Natural killer cell (primary cell): ENCODE measurements at regions of chr17 and their contacts with region 1.

Region 1: GRCh38 chr17:9924735-9925191 is 19.7 kb upstream of the RCVRN start:
- DNase-seq: peak in 1 of 2 donors; percentile 71
- ATAC-seq: peak; percentile 66 to 78 (median 76)
- H3K4me3 ChIP-seq: no peak overlapping the region
- H3K4me3 Mint-ChIP-seq: no peak overlapping the region
- H3K27ac ChIP-seq: no peak overlapping the region
- H3K27ac Mint-ChIP-seq: peak overlapping the region; percentile 50 to 74
- H3K4me1 ChIP-seq: peaks cover 3% of the 10 kb centered on the region
- H3K4me1 Mint-ChIP-seq: peaks cover 6 to 12% of the 10 kb centered on the region in 2 donors
- H3K27me3 ChIP-seq: no peaks in the 10 kb centered on the region
- H3K27me3 Mint-ChIP-seq: no peaks in the 10 kb centered on the region
- CTCF ChIP-seq: peak; percentile 87

Region 2: DNA sequence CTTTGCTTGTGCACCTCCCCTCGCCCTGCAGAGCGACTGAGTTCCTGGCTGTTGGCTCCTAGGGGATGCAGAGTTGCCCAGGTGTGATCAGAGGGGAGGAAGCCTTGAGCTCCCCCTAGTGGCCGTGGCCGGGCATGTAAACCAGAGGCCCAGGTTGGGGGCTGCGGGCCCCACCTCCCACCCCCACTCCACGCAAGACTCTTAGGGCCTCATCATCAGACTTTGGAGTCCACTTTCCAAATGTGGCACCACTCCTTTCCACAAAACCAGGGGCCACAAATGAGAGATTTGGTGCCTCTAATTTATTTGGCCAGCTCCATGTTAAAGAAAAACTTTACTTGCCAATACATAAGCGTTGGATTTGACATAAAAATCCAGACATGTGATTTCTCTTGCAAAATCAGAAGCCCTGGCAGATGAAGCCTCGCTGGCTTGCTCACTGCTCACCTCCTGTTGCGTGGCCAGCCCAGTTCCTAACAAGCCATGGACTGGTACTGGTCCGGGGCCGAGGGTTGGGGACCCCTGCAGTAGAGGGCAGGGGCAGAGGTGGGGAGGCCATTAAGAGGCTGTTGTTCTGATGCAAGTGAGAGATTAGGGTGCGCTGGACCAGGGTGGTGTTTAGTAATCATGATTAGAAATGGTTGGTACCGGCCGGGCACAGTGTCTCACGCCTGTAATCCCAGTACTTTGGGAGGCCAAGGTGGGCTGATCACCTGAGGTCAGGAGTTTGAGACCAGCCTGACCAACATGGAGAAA is 302.3 kb after region 1 on chr17:
- intact Hi-C with region 1: loop called (anchors 1 kb)
- DNase-seq: peak; percentile 62 to 72
- ATAC-seq: peak; percentile 73 to 88 (median 81)
- H3K4me3 ChIP-seq: no peak overlapping the region
- H3K4me3 Mint-ChIP-seq: no peak overlapping the region
- H3K27ac ChIP-seq: no peak overlapping the region
- H3K27ac Mint-ChIP-seq: no peak overlapping the region
- H3K4me1 ChIP-seq: peaks cover 12% of the 10 kb centered on the region
- H3K4me1 Mint-ChIP-seq: peaks cover 5 to 17% of the 10 kb centered on the region in 2 donors
- H3K27me3 ChIP-seq: no peaks in the 10 kb centered on the region
- H3K27me3 Mint-ChIP-seq: peaks cover 0 to 2% of the 10 kb centered on the region in 2 donors
- CTCF ChIP-seq: peak; percentile 99

Region 3: DNA sequence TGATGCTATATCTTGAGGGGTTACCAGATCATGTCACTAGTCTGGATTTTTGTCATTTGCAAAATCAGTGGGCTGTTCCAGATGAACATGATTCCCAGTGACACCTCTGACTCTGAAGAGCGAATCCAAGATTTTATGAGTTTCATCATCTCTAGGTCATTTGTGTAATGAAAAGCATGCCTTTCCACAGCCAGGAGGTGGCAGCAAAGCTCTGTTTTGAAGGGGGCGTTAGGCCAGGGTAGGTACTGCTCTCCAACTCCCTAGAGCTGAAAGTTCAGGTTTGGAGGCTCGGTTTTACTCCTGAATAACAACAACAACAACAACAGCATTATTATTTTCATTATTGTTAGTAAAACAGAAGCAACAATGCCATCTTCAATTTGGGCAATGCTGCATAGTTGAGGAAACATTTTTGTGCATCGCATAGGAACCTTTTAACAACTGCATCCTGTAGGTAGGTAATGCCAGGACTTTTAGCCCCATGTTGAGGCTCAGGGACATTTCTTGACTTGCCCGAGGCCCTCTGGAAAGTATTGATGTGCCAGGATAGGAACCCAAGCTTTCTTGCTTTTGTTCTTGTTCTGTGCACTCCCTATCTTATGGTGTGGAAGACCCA is 371.1 kb after region 1 on chr17:
- intact Hi-C with region 1: loop called (anchors 10 kb)
- DNase-seq: peak; percentile 30 to 41
- ATAC-seq: peak; percentile 59 to 75 (median 68)
- H3K4me3 ChIP-seq: no peak overlapping the region
- H3K4me3 Mint-ChIP-seq: no peak overlapping the region
- H3K27ac ChIP-seq: no peak overlapping the region
- H3K27ac Mint-ChIP-seq: no peak overlapping the region
- H3K4me1 ChIP-seq: no peaks in the 10 kb centered on the region
- H3K4me1 Mint-ChIP-seq: peaks cover 0 to 7% of the 10 kb centered on the region in 2 donors
- H3K27me3 ChIP-seq: no peaks in the 10 kb centered on the region
- H3K27me3 Mint-ChIP-seq: peaks cover 2 to 6% of the 10 kb centered on the region in 2 donors
- CTCF ChIP-seq: peak; percentile 63

Region 4: GRCh38 chr17:10349403-10349802 is 424.6 kb after region 1 on chr17:
- intact Hi-C with region 1: loop called (anchors 2 kb)
- DNase-seq: peak in 1 of 2 donors; percentile 12
- ATAC-seq: peak in 1 of 3 donors; percentile 42
- H3K4me3 ChIP-seq: no peak overlapping the region
- H3K4me3 Mint-ChIP-seq: no peak overlapping the region
- H3K27ac ChIP-seq: no peak overlapping the region
- H3K27ac Mint-ChIP-seq: no peak overlapping the region
- H3K4me1 ChIP-seq: no peaks in the 10 kb centered on the region
- H3K4me1 Mint-ChIP-seq: peaks cover 0 to 6% of the 10 kb centered on the region in 2 donors
- H3K27me3 ChIP-seq: no peaks in the 10 kb centered on the region
- H3K27me3 Mint-ChIP-seq: peaks cover 0 to 2% of the 10 kb centered on the region in 2 donors
- CTCF ChIP-seq: no peak

Region 5: DNA sequence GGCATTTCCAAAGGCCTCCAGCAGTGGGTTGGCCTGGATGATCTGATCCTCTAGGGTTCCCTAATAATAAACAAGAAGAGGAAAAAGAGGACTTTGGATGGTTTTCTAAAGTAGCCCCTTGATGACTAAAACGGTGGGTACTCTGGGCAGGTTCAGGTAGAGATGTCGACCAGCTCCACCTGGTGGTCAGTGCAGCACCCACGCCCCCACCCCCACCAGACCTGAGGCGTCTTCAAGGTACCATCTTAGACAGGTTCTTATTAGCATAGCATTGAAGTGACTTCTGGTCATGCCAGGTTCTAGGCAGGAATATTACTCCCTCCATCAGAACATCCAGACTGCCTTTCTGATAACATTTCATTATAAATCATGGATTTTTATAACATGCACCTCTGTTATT is 433.0 kb after region 1 on chr17:
- intact Hi-C with region 1: loop called (anchors 2 kb)
- DNase-seq: peak in 1 of 2 donors; percentile 44
- ATAC-seq: peak in 2 of 3 donors; percentile 47 to 57
- H3K4me3 ChIP-seq: no peak overlapping the region
- H3K4me3 Mint-ChIP-seq: no peak overlapping the region
- H3K27ac ChIP-seq: no peak overlapping the region
- H3K27ac Mint-ChIP-seq: no peak overlapping the region
- H3K4me1 ChIP-seq: no peaks in the 10 kb centered on the region
- H3K4me1 Mint-ChIP-seq: no peaks in the 10 kb centered on the region
- H3K27me3 ChIP-seq: no peaks in the 10 kb centered on the region
- H3K27me3 Mint-ChIP-seq: peaks cover 9 to 41% of the 10 kb centered on the region in 2 donors
- CTCF ChIP-seq: peak; percentile 16

Region 6: DNA sequence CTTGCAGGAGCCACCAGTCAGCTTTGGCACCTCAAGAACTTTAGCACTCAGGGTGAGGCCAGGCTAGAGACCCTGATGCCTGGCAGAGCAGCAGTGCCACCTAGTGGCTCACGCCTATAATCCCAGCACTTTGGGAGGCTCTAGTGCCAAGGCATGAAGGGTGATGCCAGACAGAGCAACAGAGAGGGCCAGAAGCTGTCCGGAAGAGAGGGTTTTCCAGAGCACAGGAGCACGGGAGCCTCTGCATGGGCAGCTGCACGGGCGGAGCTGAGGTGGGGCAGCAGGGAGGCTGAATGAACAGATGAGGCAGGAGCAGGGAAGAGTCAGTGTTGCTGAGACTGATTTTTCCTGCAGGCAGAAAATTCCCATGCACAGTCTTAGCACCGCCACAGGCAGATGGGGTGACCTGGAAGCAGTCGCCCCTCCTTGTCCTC is 693.5 kb after region 1 on chr17:
- intact Hi-C with region 1: loop called (anchors 1 kb)
- DNase-seq: peak; percentile 47 to 75
- ATAC-seq: peak; percentile 81 to 88 (median 83)
- H3K4me3 ChIP-seq: no peak overlapping the region
- H3K4me3 Mint-ChIP-seq: no peak overlapping the region
- H3K27ac ChIP-seq: no peak overlapping the region
- H3K27ac Mint-ChIP-seq: no peak overlapping the region
- H3K4me1 ChIP-seq: no peaks in the 10 kb centered on the region
- H3K4me1 Mint-ChIP-seq: peaks cover 0 to 4% of the 10 kb centered on the region in 2 donors
- H3K27me3 ChIP-seq: no peaks in the 10 kb centered on the region
- H3K27me3 Mint-ChIP-seq: peaks cover 6 to 9% of the 10 kb centered on the region in 2 donors
- CTCF ChIP-seq: peak; percentile 82

Region 7: GRCh38 chr17:10844621-10845387 is 920.0 kb after region 1 on chr17:
- intact Hi-C with region 1: loop called (anchors 10 kb)
- DNase-seq: peak; percentile 49 to 82
- ATAC-seq: peak; percentile 88 to 99 (median 94)
- H3K4me3 ChIP-seq: peak overlapping the region; percentile 8
- H3K4me3 Mint-ChIP-seq: peak overlapping the region; percentile 21
- H3K27ac ChIP-seq: no peak overlapping the region
- H3K27ac Mint-ChIP-seq: peak overlapping the region in 1 of 2 donors; percentile 15
- H3K4me1 ChIP-seq: peaks cover 5% of the 10 kb centered on the region
- H3K4me1 Mint-ChIP-seq: peaks cover 8 to 12% of the 10 kb centered on the region in 2 donors
- H3K27me3 ChIP-seq: no peaks in the 10 kb centered on the region
- H3K27me3 Mint-ChIP-seq: peaks cover 8 to 14% of the 10 kb centered on the region in 2 donors
- CTCF ChIP-seq: peak; percentile 94